ENCODE measurements at regions of chr16 and their contacts with region 1.

Region 1: GRCh38 chr16:87973717-87974116 is 22.5 kb downstream of the BANP start:
- DNase-seq: no peak
- H3K4me3 Mint-ChIP-seq: no peak overlapping the region
- H3K27ac Mint-ChIP-seq: no peak overlapping the region
- H3K4me1 Mint-ChIP-seq: peaks cover 22% of the 10 kb centered on the region
- H3K27me3 Mint-ChIP-seq: no peaks in the 10 kb centered on the region

Region 2: DNA sequence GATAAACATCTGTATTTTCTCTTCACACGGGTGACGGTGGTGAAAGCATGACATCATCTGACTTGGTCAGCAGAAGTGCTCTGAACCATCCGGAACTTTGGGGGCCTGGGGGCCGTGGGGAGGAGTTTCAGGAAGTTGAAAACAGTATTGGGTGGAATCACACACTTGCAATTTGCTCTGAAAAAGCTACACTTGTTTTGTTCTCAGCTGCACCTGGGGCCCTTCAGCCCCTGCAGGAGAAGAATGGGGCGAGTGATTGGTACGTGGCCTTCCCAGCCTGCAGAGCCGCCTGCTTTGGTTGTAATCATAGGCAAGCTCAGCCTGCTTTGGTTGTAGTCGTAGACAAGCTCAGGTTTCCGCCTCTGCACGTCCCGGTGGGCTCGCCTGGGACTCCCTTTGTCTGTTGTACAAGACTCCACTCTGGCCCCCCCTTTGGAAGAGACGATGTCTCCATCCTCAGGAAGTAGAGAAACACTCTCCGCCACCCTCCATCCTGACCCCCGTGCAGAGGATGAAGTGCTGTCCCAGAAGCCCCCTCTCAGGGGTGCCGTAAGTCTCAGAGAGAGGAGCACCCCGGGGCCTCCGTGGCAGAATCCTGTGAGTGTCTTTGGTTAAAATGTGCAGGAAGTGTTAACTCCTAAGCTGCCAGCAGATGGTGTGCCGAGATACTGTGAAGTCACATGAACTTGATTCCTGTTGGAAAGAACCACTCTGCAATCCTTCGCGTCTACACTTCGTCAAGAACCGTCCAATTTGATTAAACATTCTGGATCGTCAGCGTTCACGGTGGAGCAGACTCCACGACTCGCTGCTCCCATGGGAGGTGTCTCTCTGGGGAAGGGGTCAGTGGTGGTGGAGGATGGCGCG is 17.1 kb before region 1 on chr16:
- CTCF ChIA-PET with region 1: interaction called, 11 read pairs
- POLR2A ChIA-PET with region 1: interaction called, 4 read pairs
- DNase-seq: peak; percentile 82
- H3K4me3 Mint-ChIP-seq: peak overlapping the region; percentile 78
- H3K27ac Mint-ChIP-seq: peak overlapping the region; percentile 99
- H3K4me1 Mint-ChIP-seq: peaks cover 81% of the 10 kb centered on the region
- H3K27me3 Mint-ChIP-seq: no peaks in the 10 kb centered on the region

Measured in activated CD4-positive, alpha-beta T cell treated with anti-CD3 and anti-CD28 coated beads, Interleukin-2, amount 10 ng/mL, durations not matched to agents 7 days and 5 days (primary cell).